HAP-1 (cell line): ENCODE measurements at regions of chr9 and their contacts with region 1.

Region 1: GRCh38 chr9:70352802-70353201 is 61.7 kb downstream of the KLF9 start:
- DNase-seq: no peak
- H3K4me3 ChIP-seq: no peak overlapping the region
- H3K4me1 ChIP-seq: no peaks in the 10 kb centered on the region
- H3K27me3 ChIP-seq: no peaks in the 10 kb centered on the region

Region 2: DNA sequence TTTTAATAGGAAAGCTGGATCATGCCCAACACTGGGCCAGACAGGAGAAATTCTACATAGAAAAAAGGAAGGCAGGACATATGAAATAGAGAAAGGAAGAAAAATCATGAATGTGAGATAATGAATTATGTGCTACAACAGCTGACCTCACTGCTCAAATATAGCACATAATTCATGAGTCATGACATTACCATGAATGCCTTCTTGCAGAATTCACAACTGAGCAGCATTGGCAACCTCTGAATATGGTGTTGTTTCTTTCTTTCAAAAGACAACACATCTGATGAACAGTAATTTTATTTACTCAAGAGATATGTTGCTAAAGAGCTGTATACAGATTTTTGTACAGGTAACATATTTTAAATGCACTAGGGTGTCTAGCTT is 715.0 kb before region 1 on chr9:
- in situ Hi-C with region 1: no loop called
- DNase-seq: no peak
- H3K4me3 ChIP-seq: no peak overlapping the region
- H3K4me1 ChIP-seq: no peaks in the 10 kb centered on the region
- H3K27me3 ChIP-seq: no peaks in the 10 kb centered on the region

Region 3: GRCh38 chr9:70484210-70485130 is 131.7 kb after region 1 on chr9:
- in situ Hi-C with region 1: loop called (anchors 25 kb)
- DNase-seq: peak; percentile 56 to 70
- H3K4me3 ChIP-seq: no peak overlapping the region
- H3K4me1 ChIP-seq: peaks cover 13% of the 10 kb centered on the region
- H3K27me3 ChIP-seq: no peaks in the 10 kb centered on the region